BJ (cell line): ENCODE measurements at regions of chr21 and their contacts with region 1.

Region 1: GRCh38 chr21:34878501-34878900 is 170.6 kb downstream of the RUNX1 start:
- DNase-seq: no peak
- H3K4me3 ChIP-seq: peak overlapping the region; percentile 12; the same call in 1 of the 2 replicates
- H3K27me3 ChIP-seq: no peaks in the 10 kb centered on the region
- CTCF ChIP-seq: no peak

Region 2: GRCh38 chr21:35059742-35060141 is 181.2 kb after region 1 on chr21:
- CTCF ChIA-PET with region 1: no interaction called
- POLR2A ChIA-PET with region 1: no interaction called
- DNase-seq: no peak
- H3K4me3 ChIP-seq: no peak overlapping the region
- H3K27me3 ChIP-seq: no peaks in the 10 kb centered on the region
- CTCF ChIP-seq: no peak

Region 3: DNA sequence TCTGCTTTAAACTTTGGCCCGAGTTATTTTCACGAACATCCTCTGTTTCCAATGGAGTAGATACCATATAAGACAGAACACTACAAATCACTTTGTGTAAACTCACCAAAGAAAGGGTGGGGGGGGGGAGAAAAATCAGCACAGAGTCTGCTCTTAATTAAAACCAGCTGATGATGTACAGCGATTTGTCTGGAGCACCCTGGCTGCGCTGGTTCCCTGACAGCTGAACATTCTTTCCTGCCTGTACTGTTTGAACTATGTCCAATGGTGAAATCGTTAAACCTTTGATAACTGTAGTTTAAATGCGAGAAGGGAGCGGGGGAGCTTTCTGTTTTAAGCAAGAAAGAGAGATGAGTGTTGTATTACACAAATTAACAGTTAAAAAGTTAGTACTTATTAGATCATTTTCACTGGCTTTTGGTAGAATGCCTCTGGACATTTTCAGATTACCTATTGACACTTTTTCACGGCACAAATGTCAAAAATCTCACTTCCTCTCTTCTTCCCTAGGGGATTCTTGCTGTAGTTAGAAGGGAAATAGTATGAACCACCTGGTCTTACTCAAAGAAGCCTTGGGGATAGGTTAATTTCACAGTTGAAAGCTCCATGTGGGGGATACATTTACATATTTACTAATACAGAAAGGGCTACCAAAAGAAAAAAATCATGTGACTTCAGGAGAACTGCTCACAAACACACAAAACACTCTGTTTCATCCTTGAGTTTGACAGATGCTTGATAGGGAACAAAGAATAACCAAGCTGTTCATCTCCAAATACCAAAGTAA is 310.8 kb after region 1 on chr21:
- CTCF ChIA-PET with region 1: no interaction called
- POLR2A ChIA-PET with region 1: interaction called, 11 read pairs
- DNase-seq: peak; percentile 59
- H3K4me3 ChIP-seq: no peak overlapping the region
- H3K27me3 ChIP-seq: no peaks in the 10 kb centered on the region
- CTCF ChIP-seq: no peak